ENCODE measurements at regions of chr17 and their contacts with region 1.

Region 1: DNA sequence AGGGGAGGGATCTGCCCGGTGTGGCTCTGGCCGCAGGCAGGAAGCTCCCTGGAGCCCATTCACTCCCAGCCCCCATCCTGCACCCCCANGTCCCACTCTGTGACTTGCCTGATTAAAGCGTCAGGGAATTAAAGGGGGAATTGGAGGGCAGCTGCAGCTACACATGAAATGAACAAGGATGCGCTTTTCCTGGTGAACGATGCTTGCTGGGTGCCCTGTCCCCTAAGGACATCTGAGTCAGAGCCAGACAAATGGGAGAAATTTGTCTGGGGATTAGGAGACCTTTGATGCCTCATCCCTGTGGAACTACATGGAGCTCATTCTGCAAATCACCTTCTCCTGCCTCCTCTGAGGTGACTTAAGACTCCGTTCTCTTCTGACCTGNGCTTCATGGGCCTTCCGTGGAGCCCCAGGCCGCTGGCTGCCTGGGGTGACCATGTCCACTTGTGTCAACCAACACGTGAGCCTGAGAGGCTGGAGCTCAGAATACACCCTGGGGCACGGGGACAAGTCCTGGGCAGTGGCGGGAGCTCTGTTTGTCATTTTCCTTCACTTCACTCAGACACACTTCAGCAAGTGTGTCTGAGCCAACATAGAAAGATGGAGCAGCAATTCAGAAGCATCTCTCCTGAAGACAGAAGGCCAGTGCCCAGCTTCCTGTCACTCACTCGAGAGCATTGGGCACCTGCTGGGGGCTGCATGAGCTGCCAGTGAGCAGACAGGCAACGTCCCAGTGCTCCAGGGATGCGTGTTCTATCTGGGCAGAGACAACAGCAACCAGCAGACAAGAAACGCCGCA is 54.1 kb downstream of the METRNL start:
- DNase-seq: no peak
- H3K4me3 ChIP-seq: no peak overlapping the region
- CTCF ChIP-seq: no peak

Region 2: GRCh38 chr17:83079352-83079747 is 54.2 kb before region 1 on chr17 and contains the start of gene METRNL:
- CTCF ChIA-PET with region 1: no interaction called
- POLR2A ChIA-PET with region 1: no interaction called
- DNase-seq: no peak
- H3K4me3 ChIP-seq: peak within 1 kb of the TSS; percentile 60
- CTCF ChIP-seq: no peak

Region 3: GRCh38 chr17:83144421-83145357 is 11.2 kb after region 1 on chr17:
- CTCF ChIA-PET with region 1: interaction called, 11 read pairs
- POLR2A ChIA-PET with region 1: interaction called, 3 read pairs
- DNase-seq: no peak
- H3K4me3 ChIP-seq: no peak overlapping the region
- CTCF ChIP-seq: no peak

Measured in AG04449 (cell line).